CD4-positive, alpha-beta memory T cell (primary cell): ENCODE measurements at regions of chr5 and their contacts with region 1.

Region 1: DNA sequence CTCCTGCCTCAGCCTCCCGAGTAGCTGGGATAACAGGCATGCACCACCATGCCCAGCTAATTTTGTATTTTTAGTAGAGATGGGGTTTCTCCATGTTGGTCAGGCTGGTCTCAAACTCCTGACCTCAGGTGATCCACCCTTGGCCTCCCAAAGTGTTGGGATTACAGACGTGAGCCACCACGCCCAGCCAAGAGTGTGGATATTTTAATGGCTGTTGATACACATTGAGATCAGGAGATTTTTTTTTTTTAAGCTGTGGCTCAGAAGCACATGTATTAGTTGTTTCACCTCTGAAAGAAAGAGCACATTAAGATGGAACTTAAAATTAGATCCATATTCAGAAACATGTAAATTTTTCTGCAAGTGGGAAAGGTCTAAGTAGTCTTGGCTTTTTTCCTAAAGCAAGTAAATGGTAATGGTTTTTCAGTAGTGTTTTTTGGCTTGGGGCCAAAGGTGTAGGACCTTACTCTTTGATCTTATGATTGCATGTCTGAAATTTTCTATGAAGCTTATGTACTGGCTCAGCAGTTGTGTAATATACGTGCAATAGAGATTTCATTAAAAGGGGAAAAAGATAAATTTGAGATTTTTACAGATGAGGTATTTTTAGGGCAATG is 9.9 kb downstream of the RBM27 start:
- DNase-seq: no peak
- H3K4me3 ChIP-seq: no peak overlapping the region
- H3K4me3 Mint-ChIP-seq: peak overlapping the region in 3 of 8 donors; percentile 20 to 59 (median 31)
- H3K27ac ChIP-seq: no peak overlapping the region
- H3K27ac Mint-ChIP-seq: peak overlapping the region in 1 of 7 donors; percentile 46
- H3K4me1 ChIP-seq: peaks cover 51% of the 10 kb centered on the region
- H3K4me1 Mint-ChIP-seq: peaks cover 36 to 68% (median 53%) of the 10 kb centered on the region in 4 donors
- H3K27me3 ChIP-seq: no peaks in the 10 kb centered on the region
- H3K27me3 Mint-ChIP-seq: no peaks in the 10 kb centered on the region

Region 2: GRCh38 chr5:146179696-146180095 is 33.6 kb before region 1 on chr5:
- CTCF ChIA-PET with region 1: no interaction called
- POLR2A ChIA-PET with region 1: no interaction called
- intact Hi-C with region 1: loop called (anchors 2 kb)
- DNase-seq: no peak
- H3K4me3 ChIP-seq: no peak overlapping the region
- H3K4me3 Mint-ChIP-seq: peak overlapping the region in 5 of 8 donors; percentile 12 to 33 (median 23)
- H3K27ac ChIP-seq: no peak overlapping the region
- H3K27ac Mint-ChIP-seq: peak overlapping the region in 1 of 7 donors; percentile 25
- H3K4me1 ChIP-seq: peaks cover 30% of the 10 kb centered on the region
- H3K4me1 Mint-ChIP-seq: peaks cover 15 to 30% (median 24%) of the 10 kb centered on the region in 4 donors
- H3K27me3 ChIP-seq: no peaks in the 10 kb centered on the region
- H3K27me3 Mint-ChIP-seq: no peaks in the 10 kb centered on the region